K562 (cell line): ENCODE measurements at regions of chr20 and their contacts with region 1.

Region 1: GRCh38 chr20:2873010-2873746 is at the start of gene PTPRA:
- DNase-seq: peak; percentile 92 to 94 (median 92)
- ATAC-seq: peak; percentile 89
- H3K4me3 ChIP-seq: peak within 1 kb of the TSS; percentile 98
- H3K27ac ChIP-seq: peak within 1 kb of the TSS; percentile 95
- H3K4me1 ChIP-seq: peaks cover 32 to 33% of the 10 kb centered on the region in 2 experiments; a peak in 4 of 5 replicates
- H3K27me3 ChIP-seq: no peaks in the 10 kb centered on the region; a peak in 1 of 5 replicates
- CTCF ChIP-seq: no peak
- EP300 ChIP-seq: no peak
- POLR2A ChIP-seq: peak; percentile 98
- RAD21 ChIP-seq: no peak
- polyA plus RNA-seq, gene PTPRA: 3.4 to 6.2 TPM

Region 2: DNA sequence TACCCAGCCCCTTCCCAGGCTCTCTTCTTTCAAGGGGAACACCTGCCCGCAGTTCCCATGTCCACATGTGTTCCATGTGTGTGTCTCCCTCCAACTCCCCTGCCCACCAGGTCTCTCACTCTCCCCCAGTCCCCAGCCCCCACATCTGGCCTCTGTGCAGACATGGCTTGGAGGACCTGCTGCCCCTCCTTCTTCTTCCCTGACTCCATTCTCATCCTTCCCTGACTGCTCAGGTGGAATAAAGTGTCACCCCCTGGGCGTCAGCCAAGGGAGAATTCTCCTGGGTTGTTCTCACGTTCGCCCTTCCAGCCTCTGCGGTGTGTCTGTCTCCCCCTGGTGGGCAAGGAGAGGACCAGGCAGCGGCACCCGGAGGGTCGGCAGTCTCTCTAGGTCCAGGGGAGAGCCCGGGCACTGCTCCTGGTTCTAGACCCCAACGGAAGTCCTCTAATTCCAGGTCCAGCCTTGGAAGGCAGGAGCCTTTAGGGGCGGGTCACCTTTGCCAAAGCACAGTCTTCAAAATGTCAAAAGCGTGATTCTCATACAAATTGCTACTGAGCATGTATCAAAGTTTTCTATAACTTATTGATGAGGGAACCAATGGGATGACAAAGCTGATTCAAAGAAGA is 130.1 kb before region 1 on chr20:
- CTCF ChIA-PET with region 1: no interaction called
- POLR2A ChIA-PET with region 1: no interaction called
- in situ Hi-C with region 1: no loop called
- intact Hi-C with region 1: no loop called
- DNase-seq: peak; percentile 65 to 70 (median 68)
- ATAC-seq: peak; percentile 93
- H3K4me3 ChIP-seq: no peak overlapping the region
- H3K27ac ChIP-seq: no peak overlapping the region
- H3K4me1 ChIP-seq: no peaks in the 10 kb centered on the region
- H3K27me3 ChIP-seq: peaks cover 3 to 48% of the 10 kb centered on the region in 2 experiments
- CTCF ChIP-seq: peak; percentile 74 to 84 (median 83)
- EP300 ChIP-seq: no peak
- POLR2A ChIP-seq: no peak
- RAD21 ChIP-seq: peak in 1 of 2 experiments; percentile 59; a peak in 2 of 4 replicates

Region 3: DNA sequence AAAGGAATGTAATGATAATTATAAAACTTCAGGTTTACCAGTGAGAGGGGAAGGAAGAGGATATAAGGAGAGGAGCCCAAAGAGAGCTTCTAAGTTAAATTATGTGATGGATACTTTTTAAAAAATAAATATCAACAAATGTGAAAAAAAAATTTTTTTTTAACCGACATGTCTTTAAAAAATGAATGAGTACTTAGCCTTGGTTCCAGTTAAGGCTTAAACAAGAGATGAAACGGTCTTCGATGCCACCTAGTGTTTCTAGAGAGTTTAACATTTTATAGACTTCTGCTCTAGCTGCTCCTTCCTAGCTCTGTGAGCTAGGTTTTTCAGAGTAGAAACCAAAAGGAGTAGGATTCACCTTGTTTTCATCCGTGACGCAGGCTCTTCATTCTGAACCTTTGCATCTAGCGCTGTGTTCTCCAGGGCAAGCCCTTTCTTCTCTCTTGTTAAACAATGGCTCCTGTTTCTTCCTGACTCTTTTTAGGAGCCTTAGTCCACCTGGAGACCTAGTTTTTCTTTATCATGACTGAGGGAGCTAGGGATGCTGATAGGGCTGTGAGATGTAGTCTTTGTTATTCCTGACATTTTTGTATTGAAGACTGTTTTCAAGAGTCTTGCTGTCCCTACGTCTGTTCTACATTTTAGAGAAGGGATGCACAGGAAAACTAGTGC is 127.8 kb after region 1 on chr20:
- CTCF ChIA-PET with region 1: interaction called, 3 read pairs
- POLR2A ChIA-PET with region 1: no interaction called
- in situ Hi-C with region 1: no loop called
- intact Hi-C with region 1: loop called (anchors 5 kb)
- DNase-seq: peak; percentile 16 to 59 (median 20)
- ATAC-seq: peak; percentile 88
- H3K4me3 ChIP-seq: no peak overlapping the region
- H3K27ac ChIP-seq: no peak overlapping the region
- H3K4me1 ChIP-seq: no peaks in the 10 kb centered on the region
- H3K27me3 ChIP-seq: no peaks in the 10 kb centered on the region
- CTCF ChIP-seq: peak in 2 of 3 experiments; percentile 49 to 60; a peak in 4 of 6 replicates
- EP300 ChIP-seq: no peak
- POLR2A ChIP-seq: no peak
- RAD21 ChIP-seq: peak; percentile 42 to 68

Region 4: DNA sequence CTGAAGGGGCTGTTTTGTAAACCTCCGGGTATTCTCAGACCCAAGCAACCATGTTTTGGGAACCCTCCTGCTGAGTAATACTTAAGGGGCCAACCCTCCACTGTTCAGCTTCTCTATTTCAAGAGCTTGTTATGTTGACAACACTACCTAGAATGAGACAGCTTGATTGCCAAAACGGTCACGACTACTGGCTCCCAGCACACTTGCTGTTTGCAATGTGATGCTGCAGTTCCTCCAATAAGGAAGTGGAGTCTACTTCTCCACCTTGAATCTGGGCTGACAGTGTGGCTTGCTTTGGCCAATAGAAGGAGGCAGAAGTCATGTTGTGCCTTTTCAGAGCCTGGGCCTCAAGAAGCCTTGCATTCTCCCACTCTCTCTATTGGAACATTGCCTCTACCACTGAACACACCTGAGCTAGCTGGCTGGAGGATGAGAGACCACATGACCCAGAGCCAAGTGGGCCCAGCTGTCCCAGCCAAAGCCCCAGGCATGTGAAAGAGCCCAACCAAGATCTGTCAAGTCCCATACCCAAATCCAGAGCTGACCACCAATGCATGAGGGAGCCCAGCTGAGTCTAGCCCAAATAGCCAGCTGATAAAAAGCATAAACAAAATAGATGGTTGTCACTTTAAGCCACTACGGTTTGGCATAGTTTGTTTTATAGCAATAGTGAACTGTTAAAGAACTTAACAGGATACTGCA is 1956.5 kb after region 1 on chr20:
- CTCF ChIA-PET with region 1: no interaction called
- POLR2A ChIA-PET with region 1: no interaction called
- in situ Hi-C with region 1: no loop called
- intact Hi-C with region 1: no loop called
- DNase-seq: no peak
- ATAC-seq: no peak
- H3K4me3 ChIP-seq: no peak overlapping the region
- H3K27ac ChIP-seq: no peak overlapping the region
- H3K4me1 ChIP-seq: no peaks in the 10 kb centered on the region
- H3K27me3 ChIP-seq: peaks cover 0 to 11% of the 10 kb centered on the region in 2 experiments; a peak in 2 of 5 replicates
- CTCF ChIP-seq: no peak
- EP300 ChIP-seq: no peak
- POLR2A ChIP-seq: no peak
- RAD21 ChIP-seq: no peak